OCI-LY7 (cell line): ENCODE measurements at regions of chrX and their contacts with region 1.

Region 1: GRCh38 chrX:38327007-38327774 is at the start of gene RPGR:
- DNase-seq: peak; percentile 89
- H3K4me3 ChIP-seq: peak within 1 kb of the TSS; percentile 86
- H3K27ac ChIP-seq: peak within 1 kb of the TSS; percentile 54
- H3K4me1 ChIP-seq: no peaks in the 10 kb centered on the region
- CTCF ChIP-seq: peak; percentile 75
- total RNA-seq, gene RPGR: 11.6 and 18.2 TPM in 2 replicates

Region 2: GRCh38 chrX:38192007-38192810 is 135.0 kb before region 1 on chrX:
- CTCF ChIA-PET with region 1: interaction called, 11 read pairs
- POLR2A ChIA-PET with region 1: no interaction called
- intact Hi-C with region 1: loop called (anchors 1 kb)
- DNase-seq: peak; percentile 65
- H3K4me3 ChIP-seq: no peak overlapping the region
- H3K27ac ChIP-seq: no peak overlapping the region
- H3K4me1 ChIP-seq: peaks cover 6% of the 10 kb centered on the region
- CTCF ChIP-seq: peak; percentile 80

Region 3: GRCh38 chrX:38206036-38206435 is 121.2 kb before region 1 on chrX:
- CTCF ChIA-PET with region 1: no interaction called
- POLR2A ChIA-PET with region 1: interaction called, 4 read pairs
- intact Hi-C with region 1: loop called (anchors 1 kb)
- DNase-seq: no peak
- H3K4me3 ChIP-seq: no peak overlapping the region
- H3K27ac ChIP-seq: peak overlapping the region; percentile 99
- H3K4me1 ChIP-seq: peaks cover 36% of the 10 kb centered on the region
- CTCF ChIP-seq: no peak

Region 4: GRCh38 chrX:38260231-38260630 is 67.0 kb before region 1 on chrX:
- CTCF ChIA-PET with region 1: no interaction called
- POLR2A ChIA-PET with region 1: no interaction called
- intact Hi-C with region 1: loop called (anchors 5 kb)
- DNase-seq: peak; percentile 35
- H3K4me3 ChIP-seq: no peak overlapping the region
- H3K27ac ChIP-seq: no peak overlapping the region
- H3K4me1 ChIP-seq: no peaks in the 10 kb centered on the region
- CTCF ChIP-seq: peak; percentile 68